ENCODE measurements at regions of chr11 and their contacts with region 1.

Region 1: GRCh38 chr11:78645226-78646202 is 70.8 kb upstream of the NARS2 start:
- DNase-seq: peak; percentile 60 to 76 (median 70)
- ATAC-seq: peak; percentile 92 to 97 (median 94)
- H3K4me3 ChIP-seq: no peak overlapping the region
- H3K27ac ChIP-seq: no peak overlapping the region
- H3K4me1 ChIP-seq: no peaks in the 10 kb centered on the region
- H3K27me3 ChIP-seq: no peaks in the 10 kb centered on the region
- CTCF ChIP-seq: peak; percentile 91 to 94 (median 94)
- POLR2A ChIP-seq: no peak

Region 2: GRCh38 chr11:78961247-78961646 is 315.7 kb after region 1 on chr11:
- intact Hi-C with region 1: loop called in 1 of 2 experiments (anchors 10 kb)
- DNase-seq: peak in 1 of 3 donors; percentile 33
- ATAC-seq: peak; percentile 77 to 97 (median 87)
- H3K4me3 ChIP-seq: no peak overlapping the region
- H3K27ac ChIP-seq: no peak overlapping the region
- H3K4me1 ChIP-seq: no peaks in the 10 kb centered on the region
- H3K27me3 ChIP-seq: no peaks in the 10 kb centered on the region
- CTCF ChIP-seq: peak; percentile 46 to 70 (median 51)
- POLR2A ChIP-seq: no peak

Region 3: DNA sequence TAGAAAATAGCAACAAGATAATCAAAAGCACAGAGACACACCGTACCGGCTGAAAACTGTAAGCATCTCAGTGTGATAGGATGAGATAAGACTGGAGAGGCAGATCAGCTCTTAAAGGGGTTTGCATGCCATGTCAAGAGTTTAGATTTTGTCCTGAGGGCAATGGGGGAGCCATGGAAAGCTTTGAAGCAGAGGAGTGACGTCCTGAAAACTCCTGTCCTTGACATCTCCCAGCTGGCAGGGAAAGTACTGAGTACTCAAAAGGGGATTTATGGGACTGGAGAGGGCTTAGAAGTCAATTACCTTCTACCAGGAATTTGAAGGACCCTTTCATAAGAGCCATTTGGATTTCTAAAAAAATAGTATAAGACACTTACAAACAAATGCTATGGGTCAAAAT is 349.7 kb after region 1 on chr11:
- intact Hi-C with region 1: no loop called
- DNase-seq: no peak
- ATAC-seq: no peak
- H3K4me3 ChIP-seq: no peak overlapping the region
- H3K27ac ChIP-seq: no peak overlapping the region
- H3K4me1 ChIP-seq: no peaks in the 10 kb centered on the region
- H3K27me3 ChIP-seq: no peaks in the 10 kb centered on the region
- CTCF ChIP-seq: no peak
- POLR2A ChIP-seq: no peak

Region 4: GRCh38 chr11:79092791-79093353 is 447.4 kb after region 1 on chr11:
- intact Hi-C with region 1: loop called (anchors 10 kb)
- DNase-seq: no peak
- ATAC-seq: peak in 1 of 4 donors; percentile 18
- H3K4me3 ChIP-seq: no peak overlapping the region
- H3K27ac ChIP-seq: no peak overlapping the region
- H3K4me1 ChIP-seq: no peaks in the 10 kb centered on the region
- H3K27me3 ChIP-seq: no peaks in the 10 kb centered on the region
- CTCF ChIP-seq: no peak
- POLR2A ChIP-seq: no peak

Region 5: GRCh38 chr11:79493555-79494171 is 848.1 kb after region 1 on chr11:
- intact Hi-C with region 1: loop called in 1 of 2 experiments (anchors 10 kb)
- DNase-seq: peak; percentile 74 to 81 (median 77)
- ATAC-seq: peak; percentile 90 to 95 (median 92)
- H3K4me3 ChIP-seq: no peak overlapping the region
- H3K27ac ChIP-seq: no peak overlapping the region
- H3K4me1 ChIP-seq: peaks cover 0 to 14% (median 2%) of the 10 kb centered on the region in 4 donors
- H3K27me3 ChIP-seq: no peaks in the 10 kb centered on the region
- CTCF ChIP-seq: peak; percentile 63 to 94 (median 90)
- POLR2A ChIP-seq: no peak

Measured in right lobe of liver (tissue), 6 donors.